Activated CD4-positive, alpha-beta T cell treated with anti-CD3 and anti-CD28 coated beads for 36 hours (primary cell): ENCODE measurements at regions of chr13 and their contacts with region 1.

Region 1: DNA sequence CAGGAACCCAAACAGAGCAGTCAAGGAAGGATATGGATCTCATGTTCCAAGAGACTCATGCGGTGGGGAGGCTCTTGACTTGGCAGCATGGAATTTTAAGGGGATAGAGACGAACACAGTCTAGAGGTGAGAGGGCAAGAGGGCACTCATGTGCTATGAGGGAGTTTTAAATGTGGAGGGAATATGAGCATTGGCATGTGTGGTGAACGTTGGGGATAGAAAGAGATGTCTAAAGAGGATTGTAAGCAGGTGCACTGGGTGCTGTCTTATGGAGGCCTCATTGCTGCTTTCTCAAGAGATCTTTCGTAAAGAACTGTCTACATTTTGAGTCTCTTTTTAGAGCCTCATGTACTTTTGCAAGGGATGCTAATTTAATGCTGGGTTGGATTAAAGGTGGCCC is 600.3 kb upstream of the GPC6 start:
- DNase-seq: no peak
- ATAC-seq: no peak
- H3K4me3 Mint-ChIP-seq: no peak overlapping the region
- H3K27ac Mint-ChIP-seq: no peak overlapping the region
- H3K4me1 Mint-ChIP-seq: no peaks in the 10 kb centered on the region
- H3K27me3 Mint-ChIP-seq: no peaks in the 10 kb centered on the region

Region 2: DNA sequence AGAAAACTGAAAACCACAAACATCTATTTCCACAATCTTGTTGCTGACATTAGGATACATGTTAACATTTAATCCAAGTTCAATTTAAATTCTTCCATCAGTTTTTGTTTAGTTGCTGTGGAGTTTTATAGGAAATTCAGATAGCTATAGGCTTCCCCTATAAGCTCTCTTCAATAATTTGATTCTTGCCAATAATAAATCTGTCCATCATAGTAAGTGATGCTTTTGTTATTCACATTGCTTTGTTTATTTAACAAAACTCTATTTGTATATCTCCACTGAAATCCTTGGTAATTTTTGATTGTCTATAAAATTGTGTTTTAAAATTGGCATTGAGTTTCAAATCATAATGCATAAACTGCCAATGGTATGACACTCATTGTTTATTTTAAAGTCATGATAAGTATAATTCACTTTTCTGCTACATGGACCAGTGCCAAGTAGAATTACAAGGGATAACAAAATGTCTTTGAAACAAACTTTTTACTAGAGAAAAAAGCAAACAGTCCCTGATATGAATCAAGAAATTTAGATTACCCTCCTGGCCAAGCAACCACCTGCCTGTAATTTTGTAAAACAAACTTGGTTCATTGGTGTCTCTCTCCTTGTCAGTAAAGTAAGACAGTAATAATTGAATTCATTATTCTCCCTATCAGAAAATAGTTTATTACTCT is 23.0 kb after region 1 on chr13:
- CTCF ChIA-PET with region 1: no interaction called
- POLR2A ChIA-PET with region 1: no interaction called
- intact Hi-C with region 1: no loop called
- DNase-seq: no peak
- ATAC-seq: no peak
- H3K4me3 Mint-ChIP-seq: no peak overlapping the region
- H3K27ac Mint-ChIP-seq: no peak overlapping the region
- H3K4me1 Mint-ChIP-seq: no peaks in the 10 kb centered on the region
- H3K27me3 Mint-ChIP-seq: no peaks in the 10 kb centered on the region

Region 3: GRCh38 chr13:92951273-92951890 is 325.1 kb after region 1 on chr13:
- CTCF ChIA-PET with region 1: no interaction called
- POLR2A ChIA-PET with region 1: no interaction called
- intact Hi-C with region 1: loop called in 1 of 2 experiments (anchors 5 kb)
- DNase-seq: no peak
- ATAC-seq: no peak
- H3K4me3 Mint-ChIP-seq: no peak overlapping the region
- H3K27ac Mint-ChIP-seq: no peak overlapping the region
- H3K4me1 Mint-ChIP-seq: no peaks in the 10 kb centered on the region
- H3K27me3 Mint-ChIP-seq: no peaks in the 10 kb centered on the region